ENCODE measurements at regions of chr5 and their contacts with region 1.

Region 1: GRCh38 chr5:122523776-122524175 is 211.7 kb downstream of the SNCAIP start:
- DNase-seq: no peak
- ATAC-seq: no peak
- H3K4me3 ChIP-seq: no peak overlapping the region
- H3K27ac ChIP-seq: no peak overlapping the region
- H3K4me1 ChIP-seq: no peaks in the 10 kb centered on the region
- H3K27me3 ChIP-seq: peaks cover 7% of the 10 kb centered on the region; the same call in 1 of the 2 replicates
- CTCF ChIP-seq: no peak
- POLR2A ChIP-seq: no peak
- RAD21 ChIP-seq: no peak

Region 2: DNA sequence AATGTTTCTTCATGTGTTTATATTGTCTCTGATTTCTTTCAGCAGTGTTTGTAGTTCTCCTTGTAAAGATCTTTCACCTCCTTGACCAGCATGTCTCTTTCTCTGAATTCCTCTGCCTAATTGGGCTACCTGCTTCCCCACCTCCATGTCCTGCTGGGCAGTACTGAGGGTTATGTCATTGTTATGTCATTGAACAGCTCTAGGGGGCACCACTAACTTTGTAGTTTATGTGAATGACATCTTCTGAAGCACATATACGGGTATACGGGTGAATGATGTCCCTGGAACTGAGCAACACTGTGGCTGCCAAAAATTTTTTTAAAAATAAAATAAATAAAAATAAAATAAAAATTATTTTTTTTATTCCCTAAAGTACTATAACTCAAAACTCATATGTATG is 228.6 kb before region 1 on chr5:
- CTCF ChIA-PET with region 1: no interaction called
- POLR2A ChIA-PET with region 1: interaction called, 10 read pairs
- dilution Hi-C with region 1: no loop called
- in situ Hi-C with region 1: no loop called
- intact Hi-C with region 1: no loop called
- DNase-seq: no peak
- ATAC-seq: no peak
- H3K4me3 ChIP-seq: no peak overlapping the region
- H3K27ac ChIP-seq: no peak overlapping the region
- H3K4me1 ChIP-seq: peaks cover 5% of the 10 kb centered on the region; the same call in 1 of the 2 replicates
- H3K27me3 ChIP-seq: no peaks in the 10 kb centered on the region
- CTCF ChIP-seq: 0 out of 2 replicates have a peak, but pooled peaks have one; percentile 22
- POLR2A ChIP-seq: no peak
- RAD21 ChIP-seq: no peak

Region 3: DNA sequence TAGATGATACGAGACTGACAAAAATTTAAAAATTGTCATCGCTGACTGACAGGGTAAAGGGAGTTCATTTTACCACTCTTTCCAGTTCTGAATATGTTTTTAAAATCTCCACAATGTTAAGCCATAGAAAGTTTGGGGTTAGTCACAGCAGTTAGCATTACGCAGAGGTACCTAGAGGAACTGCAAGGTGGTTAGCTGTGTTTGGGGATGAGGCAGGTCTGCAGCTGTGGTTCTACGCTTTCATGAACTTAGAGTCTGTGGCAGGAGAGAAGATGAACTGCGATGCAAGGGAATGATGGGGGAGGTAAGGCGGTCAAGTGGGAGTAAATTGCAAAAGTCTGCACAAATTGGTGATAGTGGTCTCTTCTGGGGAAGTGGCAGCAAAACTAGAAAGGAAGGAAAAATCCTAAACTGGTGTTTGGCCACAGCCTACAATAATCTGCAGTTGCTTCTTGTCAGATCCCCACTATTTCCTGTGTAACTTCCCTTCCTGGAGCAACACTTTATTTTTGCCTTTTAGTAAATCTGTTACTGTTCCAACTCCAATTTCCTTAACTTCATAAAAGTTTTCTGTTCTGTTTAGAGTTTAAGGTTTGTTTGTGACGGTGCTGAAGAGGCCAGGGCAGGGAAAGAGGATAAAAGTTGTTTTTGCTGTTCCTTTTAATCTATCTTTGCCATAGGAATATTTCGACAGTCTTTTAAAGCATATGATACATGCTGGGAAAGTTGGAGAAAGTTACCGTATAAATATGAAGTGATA is 212.5 kb after region 1 on chr5:
- CTCF ChIA-PET with region 1: no interaction called
- POLR2A ChIA-PET with region 1: no interaction called
- dilution Hi-C with region 1: no loop called
- in situ Hi-C with region 1: no loop called
- intact Hi-C with region 1: no loop called
- DNase-seq: no peak
- ATAC-seq: no peak
- H3K4me3 ChIP-seq: no peak overlapping the region
- H3K27ac ChIP-seq: no peak overlapping the region
- H3K4me1 ChIP-seq: no peaks in the 10 kb centered on the region
- H3K27me3 ChIP-seq: peaks cover 2% of the 10 kb centered on the region; the same call in 1 of the 2 replicates
- CTCF ChIP-seq: no peak
- POLR2A ChIP-seq: no peak
- RAD21 ChIP-seq: no peak

Region 4: GRCh38 chr5:123423278-123424149 is 899.7 kb after region 1 on chr5 and contains the start of gene CEP120:
- CTCF ChIA-PET with region 1: no interaction called
- POLR2A ChIA-PET with region 1: no interaction called
- dilution Hi-C with region 1: no loop called
- in situ Hi-C with region 1: no loop called
- intact Hi-C with region 1: no loop called
- DNase-seq: peak; percentile 99
- ATAC-seq: peak; percentile 99
- H3K4me3 ChIP-seq: peak within 1 kb of the TSS; percentile 87
- H3K27ac ChIP-seq: peak within 1 kb of the TSS; percentile 68
- H3K4me1 ChIP-seq: no peaks in the 10 kb centered on the region; the same call in 1 of the 2 replicates
- H3K27me3 ChIP-seq: no peaks in the 10 kb centered on the region
- CTCF ChIP-seq: peak; percentile 94
- POLR2A ChIP-seq: peak; percentile 65; the same call in 1 of the 2 replicates
- RAD21 ChIP-seq: peak; percentile 64
- total RNA-seq, gene CEP120: 16.4 and 46.1 TPM in 2 replicates

Measured in IMR-90 (cell line).